HEK293 (cell line): ENCODE measurements at regions of chr11 and their contacts with region 1.

Region 1: DNA sequence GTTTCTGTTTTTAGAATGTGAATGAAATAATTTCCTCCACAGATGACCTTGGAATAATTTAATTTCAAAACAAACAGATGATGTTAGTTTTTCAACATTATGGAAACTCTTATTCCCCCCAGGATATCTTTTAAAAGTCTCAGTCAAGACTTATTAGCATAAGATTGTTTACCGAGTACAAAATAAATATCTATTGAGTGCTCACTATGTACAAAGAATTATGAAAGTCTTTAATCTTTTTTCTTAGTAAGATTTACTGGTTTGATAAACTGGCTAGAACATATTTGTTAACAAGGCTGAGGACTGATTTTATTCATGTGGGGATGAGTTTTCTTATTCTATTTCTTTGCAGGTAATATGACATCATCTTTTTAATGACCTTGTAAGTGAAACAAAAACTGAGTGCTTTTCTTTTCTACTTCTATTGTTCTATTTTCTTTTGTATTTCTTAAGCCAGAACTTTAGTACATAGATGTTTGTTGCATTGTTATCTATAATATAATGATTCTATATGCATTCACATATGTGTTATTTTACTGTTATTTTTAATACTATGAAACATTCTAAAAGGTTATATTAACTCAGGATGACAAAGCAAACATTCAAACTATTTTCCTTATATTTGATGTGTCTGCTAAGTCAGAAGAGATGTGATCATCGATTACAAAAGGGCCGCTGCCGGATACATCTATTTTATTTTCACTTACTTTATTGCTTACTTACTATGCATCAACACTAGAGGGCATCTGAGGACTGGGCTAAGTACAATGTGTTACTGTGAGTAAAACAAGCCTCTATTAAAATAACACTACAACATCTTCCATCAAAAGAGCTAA is 111.0 kb upstream of the ARHGAP42 start:
- H3K4me3 ChIP-seq: no peak overlapping the region
- H3K27ac ChIP-seq: no peak overlapping the region
- H3K4me1 ChIP-seq: no peaks in the 10 kb centered on the region
- CTCF ChIP-seq: peak; percentile 45; the same call in 1 of the 2 replicates

Region 2: DNA sequence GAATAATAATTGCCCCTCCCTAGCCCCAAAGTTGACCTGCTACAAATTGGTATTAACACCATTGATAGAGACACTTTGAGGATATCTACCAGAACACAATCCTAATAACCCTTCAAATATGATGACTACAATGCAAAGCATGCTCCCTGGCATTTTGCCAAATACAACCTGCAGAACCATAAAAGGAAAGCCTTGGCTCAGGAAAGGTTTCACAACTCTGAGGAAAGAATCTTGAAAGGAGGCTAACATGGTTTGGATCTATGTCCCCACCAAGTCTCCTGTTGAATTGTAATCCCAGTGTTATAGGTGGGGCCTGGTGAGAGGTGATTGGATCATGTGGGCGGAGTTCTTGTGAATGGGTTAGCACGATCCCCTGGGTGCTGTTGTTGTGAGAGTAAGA is 29.4 kb before region 1 on chr11:
- CTCF ChIA-PET with region 1: no interaction called
- POLR2A ChIA-PET with region 1: no interaction called
- H3K4me3 ChIP-seq: no peak overlapping the region
- H3K27ac ChIP-seq: no peak overlapping the region
- H3K4me1 ChIP-seq: peaks cover 3% of the 10 kb centered on the region
- CTCF ChIP-seq: no peak

Region 3: GRCh38 chr11:100681064-100681502 is 105.0 kb after region 1 on chr11:
- CTCF ChIA-PET with region 1: interaction called, 14 read pairs
- POLR2A ChIA-PET with region 1: no interaction called
- H3K4me3 ChIP-seq: no peak overlapping the region
- H3K27ac ChIP-seq: no peak overlapping the region
- H3K4me1 ChIP-seq: no peaks in the 10 kb centered on the region
- CTCF ChIP-seq: no peak

Region 4: GRCh38 chr11:100855466-100856067 is 279.5 kb after region 1 on chr11:
- CTCF ChIA-PET with region 1: interaction called, 24 read pairs
- POLR2A ChIA-PET with region 1: no interaction called
- H3K4me3 ChIP-seq: no peak overlapping the region
- H3K27ac ChIP-seq: no peak overlapping the region
- H3K4me1 ChIP-seq: no peaks in the 10 kb centered on the region
- CTCF ChIP-seq: peak; percentile 22; the same call in 1 of the 2 replicates

Region 5: DNA sequence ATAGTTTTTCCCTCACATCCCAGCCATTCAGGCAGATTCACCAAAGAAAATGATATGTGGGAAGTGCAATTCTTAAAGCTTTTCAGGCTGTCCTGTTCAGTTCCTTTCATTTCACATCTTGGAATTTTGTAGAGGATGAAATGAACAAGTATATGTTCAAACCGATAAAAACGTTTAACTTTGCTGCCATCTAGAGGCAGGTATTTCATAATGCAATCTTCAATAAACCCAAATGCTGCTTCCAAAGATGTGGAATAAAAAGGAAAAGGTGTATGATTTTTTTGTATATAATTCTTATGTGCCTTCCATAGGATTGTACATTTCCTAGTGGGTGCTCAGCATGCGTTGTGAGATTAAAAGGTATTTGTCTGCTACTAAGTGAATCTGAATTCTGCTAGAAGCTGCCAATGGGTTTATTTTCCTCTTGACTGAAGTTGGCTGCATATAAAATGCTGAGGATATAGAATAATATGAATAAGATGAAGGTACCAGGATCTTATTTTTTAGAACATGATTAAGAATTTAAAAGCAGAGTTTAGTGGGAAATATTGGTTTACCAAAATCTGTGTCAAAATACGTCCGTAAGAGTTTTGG is 354.2 kb after region 1 on chr11:
- CTCF ChIA-PET with region 1: interaction called, 36 read pairs
- POLR2A ChIA-PET with region 1: no interaction called
- H3K4me3 ChIP-seq: no peak overlapping the region
- H3K27ac ChIP-seq: no peak overlapping the region
- H3K4me1 ChIP-seq: no peaks in the 10 kb centered on the region; the same call in 1 of the 2 replicates
- CTCF ChIP-seq: 0 out of 2 replicates have a peak, but pooled peaks have one; percentile 16